Endothelial cell of umbilical vein (primary cell): ENCODE measurements at regions of chr2 and their contacts with region 1.

Region 1: DNA sequence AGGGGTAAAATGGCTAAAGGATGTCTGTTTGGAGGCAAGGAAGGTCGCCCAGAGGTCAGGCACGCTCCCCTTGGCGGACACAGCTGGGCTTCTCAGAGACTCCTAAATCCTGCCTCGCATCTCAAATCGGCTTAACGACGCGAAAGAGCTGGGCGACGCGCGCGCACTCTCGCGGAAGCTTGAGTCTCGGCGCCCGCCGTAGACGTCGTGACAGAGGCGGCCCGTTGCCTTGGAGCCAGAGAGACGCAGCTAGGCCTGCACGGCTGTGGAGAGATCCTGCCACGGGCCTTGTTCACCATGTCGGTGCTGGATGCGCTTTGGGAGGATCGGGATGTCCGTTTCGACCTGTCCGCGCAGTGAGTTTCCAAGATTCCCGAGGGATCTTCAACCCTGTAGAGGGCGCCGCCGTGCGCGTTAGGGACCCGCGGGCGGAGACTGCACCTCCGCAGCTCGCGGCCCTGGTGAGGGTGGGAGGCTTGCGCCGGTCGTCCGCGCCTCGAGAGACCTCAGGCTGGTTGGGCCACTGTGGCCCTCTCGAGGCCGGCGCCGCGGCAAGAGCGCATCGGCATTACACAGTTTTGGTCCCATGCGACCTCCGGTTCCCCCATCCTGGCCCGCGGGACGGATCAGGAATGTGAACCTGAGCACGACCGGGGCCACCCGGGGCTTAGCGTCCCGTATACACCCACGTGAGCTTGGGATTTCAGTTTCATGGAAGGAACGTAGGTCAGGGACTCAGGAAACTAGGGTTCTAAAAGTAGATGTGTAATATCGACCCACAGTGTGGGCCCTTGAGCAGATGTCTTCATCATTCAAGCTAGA is at the start of gene BBS5:
- DNase-seq: peak; percentile 87
- H3K4me3 ChIP-seq: peak within 1 kb of the TSS; percentile 47 to 82 (median 70)
- H3K27ac ChIP-seq: peak within 1 kb of the TSS; percentile 66
- H3K4me1 ChIP-seq: peaks cover 17% of the 10 kb centered on the region
- H3K27me3 ChIP-seq: no peaks in the 10 kb centered on the region
- CTCF ChIP-seq: peak; percentile 55 to 64
- POLR2A ChIP-seq: peak; percentile 31
- total RNA-seq, gene BBS5: 4.1 and 5.6 TPM in 2 replicates

Region 2: GRCh38 chr2:169275696-169276444 is 203.6 kb before region 1 on chr2:
- CTCF ChIA-PET with region 1: no interaction called
- POLR2A ChIA-PET with region 1: no interaction called
- dilution Hi-C with region 1: no loop called
- intact Hi-C with region 1: no loop called
- DNase-seq: peak; percentile 10
- H3K4me3 ChIP-seq: no peak overlapping the region
- H3K27ac ChIP-seq: no peak overlapping the region
- H3K4me1 ChIP-seq: no peaks in the 10 kb centered on the region
- H3K27me3 ChIP-seq: peaks cover 0 to 2% of the 10 kb centered on the region in 2 experiments
- CTCF ChIP-seq: peak; percentile 10 to 11
- POLR2A ChIP-seq: no peak

Region 3: GRCh38 chr2:169462896-169463695 is 16.4 kb before region 1 on chr2:
- CTCF ChIA-PET with region 1: interaction called, 21 read pairs
- POLR2A ChIA-PET with region 1: no interaction called
- dilution Hi-C with region 1: no loop called
- intact Hi-C with region 1: no loop called
- DNase-seq: peak; percentile 68
- H3K4me3 ChIP-seq: no peak overlapping the region
- H3K27ac ChIP-seq: no peak overlapping the region
- H3K4me1 ChIP-seq: no peaks in the 10 kb centered on the region
- H3K27me3 ChIP-seq: no peaks in the 10 kb centered on the region
- CTCF ChIP-seq: no peak
- POLR2A ChIP-seq: no peak

Region 4: DNA sequence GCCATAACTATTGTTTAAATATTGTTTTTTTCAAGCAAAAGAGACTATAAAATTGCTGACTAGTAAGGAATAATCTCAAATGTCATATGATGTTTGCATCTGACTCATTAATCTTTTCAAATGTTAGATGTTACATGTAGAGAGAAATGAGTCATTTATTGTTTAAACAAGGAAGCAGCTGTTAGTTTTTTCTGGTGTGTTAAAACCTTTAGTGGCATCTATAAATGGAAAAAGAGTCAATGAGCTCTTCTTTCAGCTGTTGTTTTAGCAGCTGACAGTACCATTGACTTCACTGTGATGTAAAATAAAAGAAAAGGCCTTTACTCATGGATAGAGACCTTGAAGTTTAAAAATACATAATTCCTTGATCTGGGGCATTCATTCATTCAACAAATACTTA is 28.2 kb after region 1 on chr2:
- CTCF ChIA-PET with region 1: interaction called, 10 read pairs
- POLR2A ChIA-PET with region 1: no interaction called
- dilution Hi-C with region 1: no loop called
- intact Hi-C with region 1: loop called (anchors 2 kb)
- DNase-seq: peak; percentile 86
- H3K4me3 ChIP-seq: no peak overlapping the region
- H3K27ac ChIP-seq: peak overlapping the region; percentile 77
- H3K4me1 ChIP-seq: peaks cover 13% of the 10 kb centered on the region
- H3K27me3 ChIP-seq: no peaks in the 10 kb centered on the region
- CTCF ChIP-seq: no peak
- POLR2A ChIP-seq: no peak